ENCODE measurements at regions of chr14 and their contacts with region 1.

Region 1: DNA sequence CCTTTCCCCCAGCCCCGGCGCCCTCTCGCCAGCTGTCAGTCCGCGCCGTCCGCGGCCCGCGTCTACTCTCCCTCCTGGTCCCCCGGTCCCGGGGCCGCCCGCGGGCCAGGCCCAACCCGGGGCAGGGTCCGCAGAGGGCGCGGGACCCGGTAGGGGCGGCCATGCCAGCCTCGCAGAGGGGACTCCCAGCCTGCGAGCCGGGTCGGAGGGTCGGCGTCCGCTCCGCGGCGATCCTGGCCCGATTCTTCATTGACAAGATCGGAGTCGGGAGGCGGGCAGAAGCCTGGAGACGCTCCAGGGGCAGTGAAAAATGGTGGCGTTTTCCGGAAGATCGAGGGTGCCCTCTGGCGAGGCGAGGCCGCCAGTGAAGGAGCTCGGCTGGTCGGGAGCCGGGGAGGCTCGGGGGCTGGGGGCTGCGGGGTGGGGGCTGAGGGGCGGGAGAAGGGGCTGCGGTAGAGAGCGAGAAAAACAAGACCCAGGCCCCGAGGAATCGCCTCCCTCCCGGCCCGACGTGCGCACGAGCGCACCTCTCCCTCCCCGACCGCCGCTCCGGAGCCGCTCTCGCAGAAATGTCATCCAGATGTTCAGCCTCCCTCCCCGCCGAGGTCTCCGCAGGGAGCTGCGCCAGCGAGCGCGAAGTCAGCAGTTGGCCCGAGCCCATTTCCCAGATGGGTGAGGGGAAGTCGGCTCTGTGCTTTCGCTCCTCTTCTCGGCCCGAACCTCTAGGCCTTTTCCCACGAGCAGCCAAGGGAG is 647 bp upstream of the TGFB3 start:
- DNase-seq: peak in 1 of 2 experiments; percentile 92
- H3K4me3 ChIP-seq: peak overlapping the region; percentile 47 to 89 (median 66)
- H3K27ac ChIP-seq: no peak overlapping the region
- H3K4me1 ChIP-seq: peaks cover 0 to 11% (median 2%) of the 10 kb centered on the region in 4 experiments; a peak in 6 of 7 replicates
- H3K27me3 ChIP-seq: peaks cover 0 to 26% (median 17%) of the 10 kb centered on the region in 4 experiments; a peak in 5 of 7 replicates
- CTCF ChIP-seq: peak; percentile 54 to 67 (median 63)
- EP300 ChIP-seq: no peak
- POLR2A ChIP-seq: no peak
- RAD21 ChIP-seq: peak; percentile 74 to 81

Region 2: DNA sequence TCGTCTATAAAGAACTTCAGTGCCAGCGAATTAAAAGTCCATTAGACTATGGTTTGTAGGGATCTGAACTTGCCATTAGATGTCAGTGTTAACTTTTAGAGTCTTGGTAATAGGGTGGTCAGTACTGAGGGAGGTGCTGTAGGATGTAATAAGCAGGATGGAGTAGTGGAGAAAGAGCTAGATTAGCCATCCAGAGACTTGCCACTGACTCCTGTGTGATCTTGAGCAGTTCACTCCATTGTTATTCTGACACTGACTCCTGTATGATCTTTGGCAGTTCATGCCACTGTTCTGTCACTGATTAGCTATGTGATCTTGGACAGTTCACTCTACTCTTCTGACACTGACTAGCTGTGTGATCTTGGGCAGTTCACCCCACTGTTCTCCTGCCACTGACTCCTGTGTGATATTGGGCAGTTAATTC is 187.8 kb before region 1 on chr14:
- CTCF ChIA-PET with region 1: interaction called, 10 read pairs
- POLR2A ChIA-PET with region 1: no interaction called
- DNase-seq: no peak
- H3K4me3 ChIP-seq: no peak overlapping the region
- H3K27ac ChIP-seq: no peak overlapping the region
- H3K4me1 ChIP-seq: no peaks in the 10 kb centered on the region
- H3K27me3 ChIP-seq: no peaks in the 10 kb centered on the region
- CTCF ChIP-seq: peak in 2 of 3 experiments; percentile 43 to 52; a peak in 2 of 4 replicates
- EP300 ChIP-seq: no peak
- POLR2A ChIP-seq: no peak
- RAD21 ChIP-seq: peak; percentile 49 to 58

Region 3: GRCh38 chr14:75884198-75884611 is 98.2 kb before region 1 on chr14:
- CTCF ChIA-PET with region 1: interaction called, 11 read pairs
- POLR2A ChIA-PET with region 1: no interaction called
- DNase-seq: no peak
- H3K4me3 ChIP-seq: no peak overlapping the region
- H3K27ac ChIP-seq: no peak overlapping the region
- H3K4me1 ChIP-seq: no peaks in the 10 kb centered on the region
- H3K27me3 ChIP-seq: no peaks in the 10 kb centered on the region
- CTCF ChIP-seq: peak; percentile 16 to 50 (median 18); a peak in 3 of 4 replicates
- EP300 ChIP-seq: no peak
- POLR2A ChIP-seq: no peak
- RAD21 ChIP-seq: peak in 1 of 2 experiments; percentile 33; a peak in 2 of 4 replicates

Region 4: GRCh38 chr14:75911883-75912282 is 70.6 kb before region 1 on chr14:
- CTCF ChIA-PET with region 1: interaction called, 261 read pairs
- POLR2A ChIA-PET with region 1: no interaction called
- DNase-seq: peak; percentile 29 to 59
- H3K4me3 ChIP-seq: no peak overlapping the region
- H3K27ac ChIP-seq: no peak overlapping the region
- H3K4me1 ChIP-seq: peaks cover 0 to 5% (median 2%) of the 10 kb centered on the region in 4 experiments; a peak in 2 of 7 replicates
- H3K27me3 ChIP-seq: no peaks in the 10 kb centered on the region
- CTCF ChIP-seq: no peak
- EP300 ChIP-seq: no peak
- POLR2A ChIP-seq: no peak
- RAD21 ChIP-seq: no peak

Region 5: GRCh38 chr14:75968456-75968855 is 14.0 kb before region 1 on chr14:
- CTCF ChIA-PET with region 1: interaction called, 25 read pairs
- POLR2A ChIA-PET with region 1: no interaction called
- DNase-seq: no peak
- H3K4me3 ChIP-seq: no peak overlapping the region
- H3K27ac ChIP-seq: no peak overlapping the region
- H3K4me1 ChIP-seq: peaks cover 0 to 3% (median under 1%) of the 10 kb centered on the region in 4 experiments; a peak in 2 of 7 replicates
- H3K27me3 ChIP-seq: no peaks in the 10 kb centered on the region
- CTCF ChIP-seq: no peak
- EP300 ChIP-seq: no peak
- POLR2A ChIP-seq: no peak
- RAD21 ChIP-seq: no peak

Measured in H1 (cell line).